ENCODE measurements at regions of chr2 and their contacts with region 1.

Region 1: GRCh38 chr2:202375609-202376408 is at the start of gene BMPR2:
- DNase-seq: peak; percentile 89
- H3K4me3 Mint-ChIP-seq: peak within 1 kb of the TSS; percentile 83
- H3K27ac Mint-ChIP-seq: peak within 1 kb of the TSS; percentile 95
- H3K4me1 Mint-ChIP-seq: peaks cover 9% of the 10 kb centered on the region
- H3K27me3 Mint-ChIP-seq: no peaks in the 10 kb centered on the region
- CTCF ChIP-seq: no peak
- total RNA-seq, gene BMPR2: 27.4 and 30.5 TPM in 2 replicates

Region 2: GRCh38 chr2:202265467-202266277 is 110.1 kb before region 1 on chr2 and contains the start of gene NOP58:
- CTCF ChIA-PET with region 1: interaction called, 3 read pairs
- POLR2A ChIA-PET with region 1: interaction called, 46 read pairs
- intact Hi-C with region 1: no loop called
- DNase-seq: peak; percentile 96
- H3K4me3 Mint-ChIP-seq: no peak within 1 kb of the TSS
- H3K27ac Mint-ChIP-seq: peak within 1 kb of the TSS; percentile 64
- H3K4me1 Mint-ChIP-seq: peaks cover 7% of the 10 kb centered on the region
- H3K27me3 Mint-ChIP-seq: no peaks in the 10 kb centered on the region
- CTCF ChIP-seq: no peak
- total RNA-seq, gene NOP58: 212 and 231 TPM in 2 replicates

Region 3: GRCh38 chr2:202299712-202300111 is 76.1 kb before region 1 on chr2:
- CTCF ChIA-PET with region 1: no interaction called
- POLR2A ChIA-PET with region 1: interaction called, 4 read pairs
- intact Hi-C with region 1: loop called (anchors 5 kb)
- DNase-seq: no peak
- H3K4me3 Mint-ChIP-seq: no peak overlapping the region
- H3K27ac Mint-ChIP-seq: no peak overlapping the region
- H3K4me1 Mint-ChIP-seq: no peaks in the 10 kb centered on the region
- H3K27me3 Mint-ChIP-seq: no peaks in the 10 kb centered on the region
- CTCF ChIP-seq: no peak

Region 4: DNA sequence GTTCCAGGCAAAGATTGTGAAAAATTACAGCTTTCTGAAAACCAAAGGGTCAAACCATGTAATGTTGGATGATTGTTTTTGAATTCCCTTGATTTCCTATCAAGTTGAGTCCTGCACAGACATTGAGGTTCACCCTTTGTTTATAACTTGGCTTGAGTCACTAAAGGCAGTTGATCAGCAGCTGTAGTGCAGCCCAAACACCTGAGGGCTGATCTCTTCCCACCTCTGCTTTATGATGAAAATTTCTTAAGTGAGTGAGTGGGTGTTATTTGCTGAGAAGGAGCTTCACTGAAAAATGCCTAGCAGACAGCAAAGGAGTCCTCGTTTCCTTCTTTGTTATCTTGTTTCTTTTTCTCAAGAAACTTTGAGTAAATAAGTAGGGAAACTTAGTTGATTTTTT is 31.6 kb before region 1 on chr2:
- CTCF ChIA-PET with region 1: interaction called, 3 read pairs
- POLR2A ChIA-PET with region 1: interaction called, 22 read pairs
- intact Hi-C with region 1: no loop called
- DNase-seq: peak; percentile 77
- H3K4me3 Mint-ChIP-seq: no peak overlapping the region
- H3K27ac Mint-ChIP-seq: peak overlapping the region; percentile 40
- H3K4me1 Mint-ChIP-seq: peaks cover 12% of the 10 kb centered on the region
- H3K27me3 Mint-ChIP-seq: no peaks in the 10 kb centered on the region
- CTCF ChIP-seq: no peak

Region 5: DNA sequence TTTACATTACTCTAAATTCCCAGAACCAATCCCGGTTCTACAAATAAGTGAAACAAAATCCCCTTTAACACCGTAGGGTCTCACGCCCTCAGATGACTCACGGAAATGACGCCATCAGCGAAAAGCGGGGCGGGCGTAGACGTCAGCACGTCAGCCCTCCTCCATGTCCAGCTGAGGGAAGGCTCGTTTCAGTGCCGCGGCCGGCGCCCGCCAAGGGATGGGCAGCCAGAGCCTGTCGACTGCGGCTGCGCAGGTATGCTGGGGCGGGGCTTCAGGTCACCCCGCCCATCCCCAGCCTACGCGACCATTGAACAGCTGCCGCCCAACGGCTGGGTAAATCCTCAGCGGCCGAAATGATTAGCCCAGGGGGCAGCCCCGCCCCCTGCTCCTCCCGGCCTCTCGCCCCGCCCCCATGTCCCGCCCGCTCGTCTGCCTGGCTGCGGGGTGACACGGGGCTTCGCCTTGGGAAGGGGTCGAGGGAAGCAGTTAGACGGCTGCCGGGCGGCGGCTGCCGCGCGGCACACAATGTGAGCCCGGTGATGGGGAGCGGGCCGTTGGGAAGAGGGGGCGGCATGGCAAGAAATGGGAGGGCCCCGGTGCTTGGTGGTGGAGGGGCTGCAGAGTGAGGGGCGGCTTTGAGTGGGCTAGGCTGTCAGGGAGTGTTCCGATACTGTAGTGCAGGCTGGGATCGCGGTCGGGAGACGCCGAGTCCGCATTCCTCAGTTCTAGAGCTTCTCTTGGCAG is 638.8 kb after region 1 on chr2 and contains the start of gene NBEAL1:
- CTCF ChIA-PET with region 1: no interaction called
- POLR2A ChIA-PET with region 1: interaction called, 3 read pairs
- intact Hi-C with region 1: loop called (anchors 5 kb)
- DNase-seq: peak; percentile 97
- H3K4me3 Mint-ChIP-seq: peak within 1 kb of the TSS; percentile 98
- H3K27ac Mint-ChIP-seq: peak within 1 kb of the TSS; percentile 99
- H3K4me1 Mint-ChIP-seq: peaks cover 30% of the 10 kb centered on the region
- H3K27me3 Mint-ChIP-seq: no peaks in the 10 kb centered on the region
- CTCF ChIP-seq: no peak
- total RNA-seq, gene NBEAL1: 18.8 and 20.4 TPM in 2 replicates

Measured in MCF 10A (cell line).